ENCODE measurements at regions of chr7 and their contacts with region 1.

Region 1: GRCh38 chr7:22219036-22219435 is 137.9 kb downstream of the RAPGEF5 start:
- DNase-seq: peak; percentile 87
- H3K4me3 ChIP-seq: peak overlapping the region; percentile 41 to 85 (median 73)
- H3K27ac ChIP-seq: peak overlapping the region; percentile 98
- H3K4me1 ChIP-seq: peaks cover 60% of the 10 kb centered on the region
- H3K27me3 ChIP-seq: no peaks in the 10 kb centered on the region
- CTCF ChIP-seq: no peak
- POLR2A ChIP-seq: peak; percentile 63

Region 2: DNA sequence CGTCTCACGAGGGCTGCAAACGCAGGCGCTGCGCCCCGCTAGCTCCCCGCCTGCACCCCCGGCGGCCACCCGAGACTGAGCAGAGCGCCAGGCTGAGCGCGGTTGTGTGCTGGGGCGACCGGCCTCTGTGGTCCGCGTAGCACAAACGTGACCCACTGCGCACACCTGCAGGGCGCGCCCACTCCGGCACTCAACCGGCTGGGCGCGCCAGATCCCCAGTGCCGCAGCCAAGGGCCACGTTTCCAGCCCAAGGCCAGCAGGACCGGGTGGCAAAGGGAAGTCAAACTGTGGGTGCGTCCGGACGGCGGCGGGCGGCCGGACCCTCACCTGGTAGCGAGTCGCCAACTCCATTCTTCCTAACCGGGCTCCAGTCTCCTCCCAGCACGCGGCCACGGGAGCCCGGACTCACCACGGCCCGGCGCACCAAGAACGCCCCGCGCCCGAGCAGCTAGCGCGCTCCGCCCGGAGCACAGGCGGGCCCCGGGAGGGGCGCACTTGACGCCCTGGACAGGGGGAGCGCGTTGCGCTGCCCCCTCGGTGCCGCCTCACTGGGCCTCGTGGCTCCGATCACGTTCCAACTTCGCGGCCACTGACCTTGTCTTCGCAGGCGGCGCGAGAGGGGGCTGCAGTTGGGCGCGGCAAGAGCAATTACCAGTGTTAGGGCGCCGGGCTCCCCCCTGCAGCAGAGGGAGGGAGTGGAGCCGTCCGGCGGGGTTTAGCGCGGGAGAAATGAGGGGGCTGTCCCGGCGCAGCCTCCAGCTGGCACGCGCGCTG is 273.4 kb before region 1 on chr7 and contains the start of gene CDCA7L:
- CTCF ChIA-PET with region 1: no interaction called
- POLR2A ChIA-PET with region 1: no interaction called
- dilution Hi-C with region 1: no loop called
- intact Hi-C with region 1: loop called (anchors 10 kb)
- DNase-seq: peak; percentile 82
- H3K4me3 ChIP-seq: peak within 1 kb of the TSS; percentile 59 to 91 (median 80)
- H3K27ac ChIP-seq: peak within 1 kb of the TSS; percentile 91
- H3K4me1 ChIP-seq: peaks cover 52% of the 10 kb centered on the region
- H3K27me3 ChIP-seq: no peaks in the 10 kb centered on the region
- CTCF ChIP-seq: no peak
- POLR2A ChIP-seq: peak; percentile 92
- total RNA-seq, gene CDCA7L: 91.6 and 93.7 TPM in 2 replicates

Region 3: GRCh38 chr7:22295402-22296264 is 76.6 kb after region 1 on chr7:
- CTCF ChIA-PET with region 1: interaction called, 3 read pairs
- POLR2A ChIA-PET with region 1: no interaction called
- dilution Hi-C with region 1: no loop called
- intact Hi-C with region 1: loop called (anchors 2 kb)
- DNase-seq: peak; percentile 80
- H3K4me3 ChIP-seq: no peak overlapping the region
- H3K27ac ChIP-seq: peak overlapping the region; percentile 10
- H3K4me1 ChIP-seq: peaks cover 5% of the 10 kb centered on the region
- H3K27me3 ChIP-seq: no peaks in the 10 kb centered on the region
- CTCF ChIP-seq: peak in 1 of 2 donors; percentile 13
- POLR2A ChIP-seq: no peak

Region 4: DNA sequence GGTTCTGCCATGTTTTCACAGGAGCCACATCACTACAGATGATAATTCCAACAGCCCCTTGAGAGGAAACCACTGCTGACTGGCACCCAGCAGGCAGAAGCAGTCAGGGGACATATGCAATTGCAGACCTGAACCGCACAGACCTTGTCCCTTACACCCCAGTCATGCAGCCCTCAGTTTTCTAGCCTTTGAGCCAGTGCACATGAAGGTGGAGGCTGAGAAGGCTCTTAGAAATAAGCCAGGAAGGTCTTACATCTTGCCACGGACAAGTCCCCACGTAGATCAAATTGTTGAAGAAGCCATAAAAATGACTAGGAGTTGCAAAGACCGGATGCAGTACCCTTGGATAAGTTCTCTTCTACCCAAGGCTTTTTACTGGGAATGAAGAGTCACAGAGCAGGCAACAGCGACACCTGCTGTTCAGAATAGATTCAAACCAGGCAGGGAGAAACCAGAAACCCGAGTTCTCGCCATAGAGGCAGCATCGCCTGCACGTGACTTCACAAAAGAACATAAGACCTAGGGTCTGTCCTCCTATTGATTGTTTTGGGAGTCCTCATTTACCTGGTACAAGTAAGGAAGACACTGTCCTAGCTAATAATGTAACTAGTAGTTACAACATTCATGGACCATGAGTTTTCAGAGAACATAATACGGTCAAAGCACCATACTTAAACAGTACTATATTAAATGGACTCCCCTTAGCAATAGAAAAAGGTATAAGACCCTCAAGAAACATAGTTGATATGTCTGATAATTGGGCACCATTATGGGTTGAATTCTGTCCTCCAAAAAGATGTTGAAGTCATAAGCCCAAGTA is 269.8 kb after region 1 on chr7:
- CTCF ChIA-PET with region 1: no interaction called
- POLR2A ChIA-PET with region 1: no interaction called
- dilution Hi-C with region 1: no loop called
- intact Hi-C with region 1: loop called (anchors 2 kb)
- DNase-seq: peak; percentile 86
- H3K4me3 ChIP-seq: no peak overlapping the region
- H3K27ac ChIP-seq: peak overlapping the region; percentile 44
- H3K4me1 ChIP-seq: peaks cover 42% of the 10 kb centered on the region
- H3K27me3 ChIP-seq: no peaks in the 10 kb centered on the region
- CTCF ChIP-seq: peak; percentile 74 to 90
- POLR2A ChIP-seq: no peak

Region 5: DNA sequence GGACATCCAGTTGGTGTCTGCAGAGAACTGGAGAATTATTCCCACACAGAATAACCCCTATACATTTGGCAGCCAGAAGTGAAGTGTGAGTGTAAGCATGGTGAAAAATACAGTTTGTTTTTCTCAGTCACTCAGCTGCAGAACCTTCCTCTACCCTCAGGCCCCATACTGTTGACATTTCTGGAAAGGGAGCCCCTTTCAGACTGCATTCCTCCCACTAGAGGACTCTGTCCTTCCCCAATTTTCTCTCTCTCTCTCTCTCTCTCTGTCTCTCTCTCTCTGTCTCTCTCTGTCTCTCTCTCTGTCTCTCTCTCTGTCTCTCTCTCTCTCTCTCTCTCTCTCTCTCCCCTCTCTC is 367.7 kb after region 1 on chr7:
- CTCF ChIA-PET with region 1: no interaction called
- POLR2A ChIA-PET with region 1: no interaction called
- dilution Hi-C with region 1: no loop called
- intact Hi-C with region 1: loop called (anchors 10 kb)
- DNase-seq: no peak
- H3K4me3 ChIP-seq: no peak overlapping the region
- H3K27ac ChIP-seq: peak overlapping the region; percentile 95
- H3K4me1 ChIP-seq: peaks cover 75% of the 10 kb centered on the region
- H3K27me3 ChIP-seq: no peaks in the 10 kb centered on the region
- CTCF ChIP-seq: peak; percentile 34 to 56
- POLR2A ChIP-seq: no peak

Region 6: DNA sequence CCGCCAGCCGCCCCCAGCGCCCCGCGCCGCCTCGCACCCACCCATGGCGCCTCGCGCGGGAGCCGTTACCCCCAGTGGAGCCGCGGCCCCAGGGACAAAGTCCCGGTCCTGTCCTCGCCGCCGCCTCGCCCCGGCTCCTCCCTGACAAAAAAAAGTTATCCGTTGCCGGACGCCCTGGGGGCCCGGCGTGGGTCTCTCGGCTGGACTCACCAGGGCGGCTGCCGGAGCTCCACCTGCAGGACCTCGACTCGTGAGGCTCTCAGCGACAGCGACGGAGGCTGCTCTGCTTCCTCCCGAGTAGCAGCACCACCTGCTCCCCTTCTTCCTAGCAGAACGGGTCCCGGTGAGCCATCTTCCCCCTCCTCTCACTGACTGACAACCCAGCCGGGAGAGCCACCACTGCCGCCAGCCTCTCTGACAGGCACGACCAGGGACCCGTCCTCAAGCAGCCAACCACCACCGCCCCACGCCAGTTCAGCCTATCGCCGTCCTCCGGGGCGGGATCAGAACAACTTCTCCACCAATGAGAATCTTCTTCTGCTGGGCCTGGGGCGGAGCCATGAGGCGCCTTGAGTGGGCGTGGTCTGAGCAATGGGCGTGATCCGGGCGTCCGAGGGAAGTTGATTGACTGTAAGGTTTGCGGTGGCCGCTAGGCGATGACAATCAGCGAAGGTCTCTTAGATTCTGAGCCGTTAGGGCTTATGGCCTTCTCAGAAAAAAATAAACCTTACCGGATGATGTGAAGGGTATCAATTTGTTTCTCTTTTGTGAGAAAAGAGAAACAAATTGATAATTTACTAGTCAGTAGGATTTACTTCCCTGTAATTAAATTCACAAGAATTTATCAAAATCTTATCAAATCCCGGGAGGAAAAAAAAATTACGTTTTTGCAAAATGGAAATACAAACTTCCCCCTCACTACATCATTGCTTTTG is 794.9 kb after region 1 on chr7 and contains the start of gene HYCC1:
- CTCF ChIA-PET with region 1: no interaction called
- POLR2A ChIA-PET with region 1: no interaction called
- dilution Hi-C with region 1: no loop called
- intact Hi-C with region 1: loop called (anchors 10 kb)
- DNase-seq: peak; percentile 99
- H3K4me3 ChIP-seq: peak within 1 kb of the TSS; percentile 66 to 94 (median 71)
- H3K27ac ChIP-seq: peak within 1 kb of the TSS; percentile 20
- H3K4me1 ChIP-seq: peaks cover 47% of the 10 kb centered on the region
- H3K27me3 ChIP-seq: no peaks in the 10 kb centered on the region
- CTCF ChIP-seq: peak; percentile 59 to 72
- POLR2A ChIP-seq: peak; percentile 96
- total RNA-seq, gene HYCC1: 43.2 and 51.8 TPM in 2 replicates